Activated B cell treated with CpG ODN at 0.5 μM for 24 hours (primary cell): ENCODE measurements at regions of chr14 and their contacts with region 1.

Region 1: DNA sequence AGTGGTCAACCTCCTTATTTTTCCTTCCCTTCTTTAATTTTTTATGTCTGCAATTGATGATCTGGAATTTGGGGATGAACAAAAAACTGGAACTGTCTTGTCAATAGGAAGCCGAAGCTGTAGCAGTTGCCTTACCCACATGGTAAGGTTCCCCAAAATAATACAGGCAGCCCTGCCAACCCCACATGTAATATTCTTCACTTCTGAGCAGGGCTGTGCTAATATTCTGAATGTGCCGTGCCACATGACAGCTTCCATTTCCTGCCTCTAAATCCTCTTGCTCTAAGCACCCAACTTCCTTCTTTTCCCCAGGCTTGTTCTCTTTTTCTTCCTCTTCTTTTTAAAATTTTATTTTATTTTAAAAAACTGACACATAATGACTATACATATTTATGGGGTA is 39.6 kb downstream of the GPATCH2L start:
- DNase-seq: no peak
- ATAC-seq: peak; percentile 40
- H3K4me3 Mint-ChIP-seq: no peak overlapping the region
- H3K27ac Mint-ChIP-seq: no peak overlapping the region
- H3K4me1 Mint-ChIP-seq: peaks cover 43% of the 10 kb centered on the region
- H3K27me3 Mint-ChIP-seq: no peaks in the 10 kb centered on the region
- CTCF ChIP-seq: no peak

Region 2: GRCh38 chr14:75628816-75629215 is 562.5 kb before region 1 on chr14:
- CTCF ChIA-PET with region 1: no interaction called
- POLR2A ChIA-PET with region 1: no interaction called
- intact Hi-C with region 1: loop called (anchors 5 kb)
- DNase-seq: no peak
- ATAC-seq: no peak
- H3K4me3 Mint-ChIP-seq: no peak overlapping the region
- H3K27ac Mint-ChIP-seq: no peak overlapping the region
- H3K4me1 Mint-ChIP-seq: peaks cover 12% of the 10 kb centered on the region
- H3K27me3 Mint-ChIP-seq: peaks cover 18% of the 10 kb centered on the region
- CTCF ChIP-seq: no peak

Region 3: DNA sequence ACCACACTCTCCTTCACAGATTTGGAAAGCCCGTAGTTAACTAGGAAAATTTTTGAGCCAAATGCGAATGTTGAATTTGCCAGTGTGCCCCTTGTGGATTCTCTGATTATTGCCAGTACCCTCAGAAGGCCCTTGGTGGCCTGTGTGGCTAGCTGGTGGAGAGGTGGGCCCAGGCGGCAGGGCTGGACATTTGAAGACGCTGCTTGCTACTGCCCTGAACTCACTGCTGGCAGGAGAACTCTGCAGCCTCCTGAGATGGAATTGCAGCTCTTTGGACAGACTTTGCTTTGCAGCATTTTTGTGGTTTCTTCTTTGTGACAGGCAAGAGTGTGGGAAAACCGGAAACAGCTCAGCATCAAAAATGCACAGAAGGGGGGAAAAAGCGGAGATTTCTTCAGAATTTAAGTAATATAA is 307.1 kb before region 1 on chr14:
- CTCF ChIA-PET with region 1: no interaction called
- POLR2A ChIA-PET with region 1: no interaction called
- intact Hi-C with region 1: no loop called
- DNase-seq: no peak
- ATAC-seq: no peak
- H3K4me3 Mint-ChIP-seq: no peak overlapping the region
- H3K27ac Mint-ChIP-seq: no peak overlapping the region
- H3K4me1 Mint-ChIP-seq: no peaks in the 10 kb centered on the region
- H3K27me3 Mint-ChIP-seq: no peaks in the 10 kb centered on the region
- CTCF ChIP-seq: no peak

Region 4: GRCh38 chr14:76151398-76152339 is 39.6 kb before region 1 on chr14 and contains the start of gene GPATCH2L:
- CTCF ChIA-PET with region 1: no interaction called
- POLR2A ChIA-PET with region 1: no interaction called
- intact Hi-C with region 1: loop called (anchors 5 kb)
- DNase-seq: peak; percentile 97
- ATAC-seq: peak; percentile 93
- H3K4me3 Mint-ChIP-seq: peak within 1 kb of the TSS; percentile 97
- H3K27ac Mint-ChIP-seq: peak within 1 kb of the TSS; percentile 94
- H3K4me1 Mint-ChIP-seq: peaks cover 53% of the 10 kb centered on the region
- H3K27me3 Mint-ChIP-seq: no peaks in the 10 kb centered on the region
- CTCF ChIP-seq: no peak
- total RNA-seq, gene GPATCH2L: 64.8 and 82.3 TPM in 2 replicates